K562 (cell line): ENCODE measurements at regions of chr4 and their contacts with region 1.

Region 1: DNA sequence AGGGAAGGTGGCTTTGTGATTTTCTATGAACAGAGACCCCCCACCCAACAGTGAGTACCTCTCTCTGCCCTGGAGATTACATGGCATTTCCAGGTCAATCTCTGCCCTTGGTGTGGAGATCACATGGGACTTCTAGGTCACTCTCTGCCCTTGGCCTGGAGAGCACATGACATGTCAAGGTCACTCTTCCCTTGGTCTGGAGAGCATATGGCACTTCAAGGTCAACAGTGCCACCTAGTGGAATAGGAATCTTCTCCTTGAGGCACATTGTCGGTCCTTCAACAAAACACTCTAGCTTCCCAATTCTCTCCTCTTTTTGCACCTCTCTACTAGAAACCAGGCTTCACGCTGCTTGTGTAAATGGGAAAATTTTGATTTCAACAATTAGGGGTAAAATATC is 66.2 kb upstream of the TACR3 start:
- DNase-seq: peak; percentile 12 to 57 (median 12)
- ATAC-seq: peak; percentile 71
- H3K4me3 ChIP-seq: no peak overlapping the region
- H3K27ac ChIP-seq: no peak overlapping the region
- H3K4me1 ChIP-seq: no peaks in the 10 kb centered on the region
- H3K27me3 ChIP-seq: no peaks in the 10 kb centered on the region
- CTCF ChIP-seq: peak; percentile 22 to 52 (median 47); a peak in 5 of 6 replicates
- EP300 ChIP-seq: no peak
- POLR2A ChIP-seq: no peak
- RAD21 ChIP-seq: peak; percentile 58 to 69

Region 2: DNA sequence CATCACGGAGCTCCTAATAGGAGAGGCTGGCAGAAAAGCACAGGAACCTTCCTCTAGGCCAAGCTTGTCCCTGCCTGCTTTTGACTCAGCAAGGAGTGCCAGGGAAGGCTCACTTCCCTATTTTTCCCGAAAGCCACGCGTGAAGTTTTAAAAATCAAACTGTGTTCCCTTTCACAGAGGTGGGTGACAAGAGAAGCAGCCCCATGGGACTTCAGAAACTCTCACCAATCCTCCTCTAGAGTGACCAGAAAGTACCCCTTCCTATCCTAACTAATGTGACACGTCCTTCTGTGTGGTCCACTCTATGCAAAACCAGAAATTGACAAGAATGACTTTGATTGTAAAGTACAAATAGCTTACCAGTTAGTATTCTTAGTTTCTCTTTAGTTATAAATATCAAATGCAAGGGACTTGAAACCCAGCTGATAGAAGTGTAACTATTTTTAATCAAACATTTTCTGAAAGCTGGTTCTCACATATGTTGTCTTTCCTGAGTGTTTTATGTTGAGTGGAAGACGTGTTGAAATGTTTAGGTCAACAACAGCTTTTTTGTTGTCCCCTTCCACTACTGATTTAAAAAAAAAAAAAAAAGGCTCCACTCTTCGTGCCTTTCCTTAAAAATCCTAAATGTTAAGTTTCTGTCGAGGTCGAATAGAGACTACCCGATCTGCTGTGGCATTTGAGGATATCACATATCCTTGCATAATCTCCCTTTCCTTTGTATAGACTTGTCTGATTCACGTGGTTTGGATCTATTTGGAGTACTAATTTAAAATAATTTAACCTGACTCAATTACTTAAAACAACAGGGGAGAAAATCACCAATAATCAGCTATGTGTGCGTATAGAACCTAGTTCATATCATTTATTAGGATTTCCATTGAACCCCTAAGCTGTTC is 1242.7 kb before region 1 on chr4:
- CTCF ChIA-PET with region 1: no interaction called
- POLR2A ChIA-PET with region 1: no interaction called
- in situ Hi-C with region 1: no loop called
- intact Hi-C with region 1: no loop called
- DNase-seq: no peak
- ATAC-seq: no peak
- H3K4me3 ChIP-seq: no peak overlapping the region
- H3K27ac ChIP-seq: no peak overlapping the region
- H3K4me1 ChIP-seq: no peaks in the 10 kb centered on the region
- H3K27me3 ChIP-seq: no peaks in the 10 kb centered on the region
- CTCF ChIP-seq: no peak
- EP300 ChIP-seq: no peak
- POLR2A ChIP-seq: no peak
- RAD21 ChIP-seq: no peak

Region 3: GRCh38 chr4:103105558-103106356 is 680.3 kb before region 1 on chr4:
- CTCF ChIA-PET with region 1: no interaction called
- POLR2A ChIA-PET with region 1: no interaction called
- in situ Hi-C with region 1: no loop called
- intact Hi-C with region 1: loop called (anchors 5 kb)
- DNase-seq: no peak
- ATAC-seq: no peak
- H3K4me3 ChIP-seq: no peak overlapping the region
- H3K27ac ChIP-seq: no peak overlapping the region
- H3K4me1 ChIP-seq: no peaks in the 10 kb centered on the region
- H3K27me3 ChIP-seq: no peaks in the 10 kb centered on the region
- CTCF ChIP-seq: no peak
- EP300 ChIP-seq: no peak
- POLR2A ChIP-seq: no peak
- RAD21 ChIP-seq: no peak

Region 4: GRCh38 chr4:103591841-103592240 is 194.2 kb before region 1 on chr4:
- CTCF ChIA-PET with region 1: no interaction called
- POLR2A ChIA-PET with region 1: no interaction called
- in situ Hi-C with region 1: no loop called
- intact Hi-C with region 1: no loop called
- DNase-seq: no peak
- ATAC-seq: no peak
- H3K4me3 ChIP-seq: no peak overlapping the region
- H3K27ac ChIP-seq: no peak overlapping the region
- H3K4me1 ChIP-seq: no peaks in the 10 kb centered on the region
- H3K27me3 ChIP-seq: no peaks in the 10 kb centered on the region
- CTCF ChIP-seq: no peak
- EP300 ChIP-seq: no peak
- POLR2A ChIP-seq: no peak
- RAD21 ChIP-seq: no peak

Region 5: DNA sequence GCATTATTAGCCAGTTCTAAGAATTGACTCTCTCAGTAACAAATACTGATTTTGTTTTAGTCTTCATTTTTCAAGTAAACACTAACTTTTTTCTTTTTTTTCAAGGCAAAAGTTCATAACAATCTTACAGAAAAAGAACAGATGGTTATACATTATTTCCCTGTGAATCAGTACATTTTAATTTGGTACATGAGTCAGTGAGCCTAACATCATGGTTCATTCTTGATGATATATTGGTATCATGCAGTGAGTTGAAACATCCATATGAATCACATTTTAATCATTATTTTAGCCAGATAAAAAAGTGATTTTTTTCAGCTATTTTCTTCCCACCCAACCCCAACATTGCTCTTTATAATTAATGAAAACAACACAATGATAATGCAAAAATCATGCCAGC is 118.1 kb after region 1 on chr4:
- CTCF ChIA-PET with region 1: no interaction called
- POLR2A ChIA-PET with region 1: no interaction called
- in situ Hi-C with region 1: no loop called
- intact Hi-C with region 1: no loop called
- DNase-seq: no peak
- ATAC-seq: no peak
- H3K4me3 ChIP-seq: no peak overlapping the region
- H3K27ac ChIP-seq: no peak overlapping the region
- H3K4me1 ChIP-seq: no peaks in the 10 kb centered on the region
- H3K27me3 ChIP-seq: no peaks in the 10 kb centered on the region
- CTCF ChIP-seq: no peak
- EP300 ChIP-seq: no peak
- POLR2A ChIP-seq: no peak
- RAD21 ChIP-seq: no peak

Region 6: DNA sequence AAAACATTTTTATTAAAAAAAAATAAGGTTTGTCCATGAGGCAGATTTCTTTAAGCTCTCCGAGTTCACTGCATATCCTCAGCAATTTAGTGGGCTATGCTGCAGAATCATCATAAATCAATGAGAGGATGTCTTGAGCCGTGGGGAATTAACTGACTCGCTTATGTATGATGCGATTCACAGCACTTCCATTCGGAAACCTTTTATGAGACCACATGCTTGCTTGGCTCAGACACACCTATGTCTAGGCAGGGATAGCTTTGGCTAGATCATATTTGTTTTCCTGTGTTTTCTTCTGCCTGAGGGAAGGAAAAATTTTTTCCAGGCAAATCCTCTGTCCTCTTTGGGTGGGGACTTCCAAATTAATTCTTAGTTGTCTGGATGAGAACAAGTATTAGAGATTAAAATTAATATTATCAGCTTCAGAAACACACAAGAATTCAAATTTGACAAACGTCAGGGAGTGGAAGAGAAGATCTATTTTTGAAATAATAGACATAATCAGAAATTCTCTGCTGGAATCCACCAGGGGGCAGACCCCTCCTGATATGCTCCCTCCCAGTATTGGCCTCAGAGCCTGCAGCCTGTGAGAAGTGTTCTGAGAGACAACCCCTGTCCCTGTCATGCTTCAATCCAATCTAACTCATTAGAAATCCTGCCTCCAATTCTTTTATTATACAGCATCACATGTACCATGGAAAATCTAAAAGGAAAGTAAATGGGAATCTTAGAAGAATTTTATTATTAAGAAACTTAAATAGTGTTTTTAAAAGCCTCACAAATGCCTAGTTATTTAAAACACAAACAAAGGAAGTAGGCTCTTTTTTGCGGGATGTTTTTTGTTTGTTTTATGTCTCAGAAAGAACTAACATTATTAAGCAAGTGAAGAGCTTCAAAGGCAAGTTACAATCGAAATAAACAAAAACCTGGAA is 278.9 kb after region 1 on chr4:
- CTCF ChIA-PET with region 1: no interaction called
- POLR2A ChIA-PET with region 1: no interaction called
- in situ Hi-C with region 1: no loop called
- intact Hi-C with region 1: no loop called
- DNase-seq: peak; percentile 7 to 14 (median 8)
- ATAC-seq: no peak
- H3K4me3 ChIP-seq: no peak overlapping the region
- H3K27ac ChIP-seq: no peak overlapping the region
- H3K4me1 ChIP-seq: no peaks in the 10 kb centered on the region
- H3K27me3 ChIP-seq: no peaks in the 10 kb centered on the region
- CTCF ChIP-seq: peak in 1 of 3 experiments; percentile 16; a peak in 2 of 6 replicates
- EP300 ChIP-seq: no peak
- POLR2A ChIP-seq: no peak
- RAD21 ChIP-seq: no peak